H1 (cell line): ENCODE measurements at regions of chr1 and their contacts with region 1.

Region 1: GRCh38 chr1:18322368-18323032 is 158.2 kb upstream of the KLHDC7A start:
- DNase-seq: peak in 1 of 2 experiments; percentile 78
- H3K4me3 ChIP-seq: no peak overlapping the region
- H3K27ac ChIP-seq: no peak overlapping the region
- H3K4me1 ChIP-seq: peaks cover 0 to 6% (median 2%) of the 10 kb centered on the region in 4 experiments; a peak in 4 of 7 replicates
- H3K27me3 ChIP-seq: peaks cover 0 to 8% (median 5%) of the 10 kb centered on the region in 4 experiments; a peak in 5 of 7 replicates
- CTCF ChIP-seq: peak; percentile 63 to 76 (median 71)
- EP300 ChIP-seq: no peak
- POLR2A ChIP-seq: no peak
- RAD21 ChIP-seq: peak; percentile 41 to 57; a peak in 3 of 4 replicates

Region 2: GRCh38 chr1:18144916-18145647 is 177.4 kb before region 1 on chr1:
- CTCF ChIA-PET with region 1: no interaction called
- POLR2A ChIA-PET with region 1: no interaction called
- DNase-seq: no peak
- H3K4me3 ChIP-seq: no peak overlapping the region
- H3K27ac ChIP-seq: no peak overlapping the region
- H3K4me1 ChIP-seq: peaks cover 0 to 8% (median 1%) of the 10 kb centered on the region in 4 experiments; a peak in 3 of 7 replicates
- H3K27me3 ChIP-seq: no peaks in the 10 kb centered on the region
- CTCF ChIP-seq: no peak
- EP300 ChIP-seq: no peak
- POLR2A ChIP-seq: no peak
- RAD21 ChIP-seq: no peak

Region 3: GRCh38 chr1:18217398-18218043 is 105.0 kb before region 1 on chr1:
- CTCF ChIA-PET with region 1: no interaction called
- POLR2A ChIA-PET with region 1: no interaction called
- DNase-seq: peak; percentile 27 to 68
- H3K4me3 ChIP-seq: no peak overlapping the region
- H3K27ac ChIP-seq: no peak overlapping the region
- H3K4me1 ChIP-seq: no peaks in the 10 kb centered on the region
- H3K27me3 ChIP-seq: no peaks in the 10 kb centered on the region; a peak in 1 of 7 replicates
- CTCF ChIP-seq: peak; percentile 76 to 87 (median 76)
- EP300 ChIP-seq: no peak
- POLR2A ChIP-seq: no peak
- RAD21 ChIP-seq: peak; percentile 68 to 81

Region 4: GRCh38 chr1:18288722-18289121 is 33.8 kb before region 1 on chr1:
- CTCF ChIA-PET with region 1: interaction called, 16 read pairs
- POLR2A ChIA-PET with region 1: no interaction called
- DNase-seq: no peak
- H3K4me3 ChIP-seq: no peak overlapping the region
- H3K27ac ChIP-seq: no peak overlapping the region; the same call in 1 of the 2 replicates
- H3K4me1 ChIP-seq: peaks cover 3 to 27% (median 16%) of the 10 kb centered on the region in 4 experiments
- H3K27me3 ChIP-seq: no peaks in the 10 kb centered on the region; a peak in 1 of 7 replicates
- CTCF ChIP-seq: no peak
- EP300 ChIP-seq: no peak
- POLR2A ChIP-seq: no peak
- RAD21 ChIP-seq: no peak

Region 5: DNA sequence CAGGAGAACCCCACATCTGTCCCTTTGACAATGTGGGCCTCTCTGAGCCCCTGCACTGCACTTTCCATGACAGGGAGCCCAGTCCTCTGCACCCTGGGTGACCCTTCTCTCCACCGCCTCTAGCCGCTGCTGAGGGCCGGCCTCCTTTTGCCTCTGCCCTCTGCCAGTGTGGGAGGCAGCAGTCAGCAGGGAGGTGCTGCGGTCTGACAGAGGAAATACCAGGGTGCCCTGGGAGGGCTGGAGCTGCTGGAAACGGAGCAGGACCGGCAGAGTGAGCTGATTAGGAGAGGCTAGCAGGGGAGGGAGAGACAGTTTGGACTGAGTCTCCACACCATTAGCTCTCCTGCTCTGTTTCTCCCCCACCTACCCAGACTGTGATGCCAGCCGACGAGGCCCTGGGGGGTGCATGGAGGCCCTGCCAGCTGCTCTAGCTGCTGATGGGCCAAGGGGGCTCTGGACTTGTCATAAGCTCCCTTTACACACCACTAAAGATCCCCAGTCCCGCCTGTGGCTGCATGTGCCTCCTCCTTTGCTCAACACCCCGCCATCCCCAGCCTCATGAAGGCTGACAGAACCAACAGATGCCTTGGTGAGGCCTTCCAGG is 12.8 kb before region 1 on chr1:
- CTCF ChIA-PET with region 1: interaction called, 132 read pairs
- POLR2A ChIA-PET with region 1: no interaction called
- DNase-seq: no peak
- H3K4me3 ChIP-seq: no peak overlapping the region
- H3K27ac ChIP-seq: no peak overlapping the region
- H3K4me1 ChIP-seq: no peaks in the 10 kb centered on the region; a peak in 1 of 7 replicates
- H3K27me3 ChIP-seq: no peaks in the 10 kb centered on the region
- CTCF ChIP-seq: no peak
- EP300 ChIP-seq: no peak
- POLR2A ChIP-seq: no peak
- RAD21 ChIP-seq: no peak

Region 6: GRCh38 chr1:18344755-18345154 is 22.3 kb after region 1 on chr1:
- CTCF ChIA-PET with region 1: interaction called, 15 read pairs
- POLR2A ChIA-PET with region 1: no interaction called
- DNase-seq: no peak
- H3K4me3 ChIP-seq: no peak overlapping the region
- H3K27ac ChIP-seq: no peak overlapping the region
- H3K4me1 ChIP-seq: peaks cover 0 to 4% (median 3%) of the 10 kb centered on the region in 4 experiments; a peak in 2 of 7 replicates
- H3K27me3 ChIP-seq: peaks cover 0 to 2% (median 0%) of the 10 kb centered on the region in 4 experiments; a peak in 2 of 7 replicates
- CTCF ChIP-seq: no peak
- EP300 ChIP-seq: no peak
- POLR2A ChIP-seq: no peak
- RAD21 ChIP-seq: no peak

Region 7: DNA sequence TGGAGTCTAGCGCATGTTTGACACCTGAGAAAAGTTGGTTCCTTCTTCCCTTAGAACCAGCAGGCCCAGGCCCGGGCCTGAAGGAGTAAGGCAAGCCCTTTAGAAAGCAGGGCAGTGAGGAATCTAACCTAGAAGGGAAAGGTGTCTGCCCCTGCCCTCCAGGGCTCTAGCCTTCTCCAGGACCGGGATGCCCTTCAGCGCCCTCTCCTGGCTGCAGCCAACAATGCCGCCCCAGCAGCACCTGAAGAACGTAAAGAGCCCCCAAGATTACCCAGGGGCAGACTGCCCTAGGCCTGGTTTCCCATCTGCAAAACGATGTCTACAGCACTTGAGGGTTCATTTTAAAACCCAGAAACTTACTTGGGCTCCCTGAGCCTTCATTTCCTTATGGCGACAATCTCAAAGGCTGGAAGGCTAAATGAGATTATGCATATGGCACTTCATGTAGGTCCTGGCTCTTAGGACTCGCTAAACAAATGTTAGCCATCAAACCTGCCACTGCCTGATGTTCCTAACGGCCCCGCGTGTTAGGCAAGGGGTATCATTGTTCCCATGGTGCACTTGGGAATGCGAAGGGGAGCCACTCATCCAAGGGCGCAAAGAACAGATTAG is 51.5 kb after region 1 on chr1:
- CTCF ChIA-PET with region 1: interaction called, 15 read pairs
- POLR2A ChIA-PET with region 1: no interaction called
- DNase-seq: peak; percentile 44 to 96
- H3K4me3 ChIP-seq: no peak overlapping the region
- H3K27ac ChIP-seq: no peak overlapping the region
- H3K4me1 ChIP-seq: peaks cover 0 to 6% (median 0%) of the 10 kb centered on the region in 4 experiments; a peak in 2 of 7 replicates
- H3K27me3 ChIP-seq: peaks cover 0 to 3% (median 0%) of the 10 kb centered on the region in 4 experiments; a peak in 2 of 7 replicates
- CTCF ChIP-seq: peak; percentile 95 to 96 (median 96)
- EP300 ChIP-seq: no peak
- POLR2A ChIP-seq: no peak
- RAD21 ChIP-seq: peak; percentile 68 to 83

Region 8: GRCh38 chr1:18575620-18576019 is 253.1 kb after region 1 on chr1:
- CTCF ChIA-PET with region 1: interaction called, 23 read pairs
- POLR2A ChIA-PET with region 1: no interaction called
- DNase-seq: peak; percentile 86 to 99
- H3K4me3 ChIP-seq: no peak overlapping the region
- H3K27ac ChIP-seq: no peak overlapping the region
- H3K4me1 ChIP-seq: no peaks in the 10 kb centered on the region; a peak in 1 of 7 replicates
- H3K27me3 ChIP-seq: no peaks in the 10 kb centered on the region; a peak in 1 of 7 replicates
- CTCF ChIP-seq: peak; percentile 84 to 96 (median 94)
- EP300 ChIP-seq: no peak
- POLR2A ChIP-seq: no peak
- RAD21 ChIP-seq: peak; percentile 98 to 99